Right cardiac atrium (tissue), 5 donors: ENCODE measurements at regions of chr12 and their contacts with region 1.

Region 1: GRCh38 chr12:98013560-98013959 is 501.8 kb upstream of the TMPO start:
- DNase-seq: no peak
- ATAC-seq: no peak
- H3K4me3 ChIP-seq: no peak overlapping the region
- H3K27ac ChIP-seq: no peak overlapping the region
- H3K4me1 ChIP-seq: no peaks in the 10 kb centered on the region
- H3K27me3 ChIP-seq: no peaks in the 10 kb centered on the region

Region 2: DNA sequence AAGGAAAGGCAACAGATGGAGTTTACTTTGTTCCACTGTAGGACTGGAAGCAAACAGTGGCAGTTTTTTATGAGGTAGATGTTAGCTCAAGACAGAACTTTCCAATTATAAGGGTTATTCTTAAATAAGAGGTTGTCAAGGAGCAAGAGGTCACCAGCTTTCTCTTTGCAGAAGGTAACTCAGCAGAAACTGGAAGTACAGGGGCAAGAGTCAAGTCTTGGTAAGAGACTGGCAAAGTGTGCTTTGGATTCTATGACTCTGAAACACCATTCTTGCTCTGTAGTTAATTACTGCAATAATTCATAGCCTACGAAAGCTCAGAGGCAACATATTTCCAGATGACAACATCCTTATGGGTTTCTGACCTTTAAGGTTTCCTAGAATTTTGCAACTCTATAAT is 499.6 kb before region 1 on chr12:
- intact Hi-C with region 1: no loop called
- DNase-seq: no peak
- ATAC-seq: no peak
- H3K4me3 ChIP-seq: no peak overlapping the region
- H3K27ac ChIP-seq: no peak overlapping the region
- H3K4me1 ChIP-seq: no peaks in the 10 kb centered on the region
- H3K27me3 ChIP-seq: no peaks in the 10 kb centered on the region

Region 3: DNA sequence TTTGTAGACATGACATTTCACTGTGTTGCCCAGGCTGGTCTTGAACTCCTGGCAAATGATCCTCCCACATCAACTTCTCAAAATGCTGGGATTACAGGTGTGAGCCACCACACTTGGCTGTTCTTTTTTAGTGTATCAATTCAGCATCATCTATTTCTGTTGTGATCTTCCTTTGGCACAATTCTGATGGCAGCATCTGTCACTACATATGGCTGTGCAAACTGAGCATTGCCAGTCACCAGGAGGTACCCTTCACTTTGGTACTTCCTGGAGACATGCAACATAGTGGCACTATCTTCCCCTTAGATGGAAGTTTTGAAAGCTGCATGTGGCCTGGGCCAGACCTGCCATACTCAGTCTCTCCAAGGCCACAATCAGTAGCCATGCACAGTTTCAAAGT is 34.8 kb after region 1 on chr12:
- intact Hi-C with region 1: loop called in 1 of 4 experiments (anchors 5 kb)
- DNase-seq: no peak
- ATAC-seq: no peak
- H3K4me3 ChIP-seq: no peak overlapping the region
- H3K27ac ChIP-seq: no peak overlapping the region
- H3K4me1 ChIP-seq: no peaks in the 10 kb centered on the region
- H3K27me3 ChIP-seq: no peaks in the 10 kb centered on the region